ENCODE measurements at regions of chr12 and their contacts with region 1.

Region 1: DNA sequence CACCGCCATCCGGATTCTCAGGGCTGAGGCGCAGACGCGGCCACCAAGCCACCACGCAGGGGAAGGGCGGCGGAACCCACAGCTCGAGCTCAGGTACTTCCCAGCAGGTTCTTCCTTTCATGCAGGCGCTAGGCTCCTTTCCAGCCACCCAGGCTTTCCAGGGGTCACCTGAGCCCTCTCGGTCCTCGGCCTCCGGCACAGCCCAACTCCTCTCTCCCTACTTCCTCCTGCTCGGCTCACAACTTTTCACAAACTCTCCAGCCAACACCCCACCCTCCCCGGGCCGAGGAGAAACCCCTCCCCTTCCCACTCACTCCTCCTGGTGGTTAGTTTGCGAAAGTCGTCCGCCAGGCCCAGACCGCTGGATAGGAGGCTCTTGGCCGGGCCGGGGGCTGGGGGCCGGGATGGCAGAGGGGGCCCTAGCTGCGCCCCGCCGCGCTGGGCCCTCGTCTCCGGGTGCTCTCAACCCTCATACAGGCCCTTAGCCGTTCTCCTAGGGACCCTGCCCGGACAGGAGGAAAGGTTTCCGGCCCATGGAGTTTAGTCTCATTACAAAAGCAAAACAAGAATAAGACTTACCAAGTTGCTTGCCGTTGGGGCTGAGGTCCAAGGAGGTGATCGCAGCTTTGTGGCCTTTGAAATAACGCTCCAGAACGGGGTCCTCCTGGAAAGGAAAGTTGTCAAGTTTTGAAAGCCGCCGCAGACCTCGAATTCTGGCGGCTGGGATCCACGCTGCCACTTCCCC is at the start of gene GALNT4:
- DNase-seq: peak; percentile 74
- H3K4me3 Mint-ChIP-seq: peak within 1 kb of the TSS; percentile 92
- H3K27ac Mint-ChIP-seq: peak within 1 kb of the TSS; percentile 94
- H3K4me1 Mint-ChIP-seq: peaks cover 45% of the 10 kb centered on the region
- H3K27me3 Mint-ChIP-seq: no peaks in the 10 kb centered on the region
- total RNA-seq, gene GALNT4: 8.7 TPM in 2 replicates

Region 2: DNA sequence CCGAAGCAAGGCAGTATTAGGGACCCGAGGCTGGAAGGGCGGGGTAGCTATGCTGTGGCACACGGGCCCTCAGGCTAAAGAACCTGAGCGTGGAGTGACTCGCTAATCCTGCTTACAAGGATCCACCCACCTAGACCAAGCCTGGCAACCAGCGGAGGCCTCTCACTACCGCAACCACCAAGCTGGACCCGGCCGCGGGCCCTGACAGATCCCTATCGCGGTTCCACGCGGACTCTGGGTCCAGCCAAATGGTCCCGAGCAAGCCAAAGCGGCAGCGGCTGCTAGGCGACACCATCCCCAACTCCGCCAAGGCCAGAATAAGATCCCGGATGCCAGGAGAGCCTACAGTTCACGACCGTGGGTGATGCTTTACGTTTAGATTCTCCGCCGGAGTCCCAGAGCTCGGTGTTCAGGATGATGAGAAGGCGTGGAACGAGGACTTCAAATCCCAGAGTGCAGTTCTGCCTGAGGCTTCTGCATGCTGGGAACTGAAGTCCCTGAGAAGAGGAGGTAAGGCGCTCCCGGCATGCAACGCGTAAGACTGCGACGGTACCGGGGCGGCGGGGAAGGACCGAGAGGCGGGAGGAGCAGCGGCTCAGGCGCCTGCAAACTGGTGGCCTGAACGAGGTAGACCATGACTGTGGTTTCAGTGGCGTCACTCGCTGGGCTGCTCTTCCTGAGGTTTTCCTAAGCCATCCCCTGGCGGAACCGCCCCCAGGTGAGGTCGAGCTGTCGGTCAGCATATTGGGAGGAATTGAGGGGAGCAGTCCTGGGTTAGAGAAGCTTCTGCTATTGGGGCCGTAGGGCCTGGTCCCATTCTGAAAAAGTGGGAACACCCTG is 1382.7 kb before region 1 on chr12 and contains the starts of genes CEP290 and TMTC3:
- intact Hi-C with region 1: loop called (anchors 2 kb)
- DNase-seq: peak; percentile 92
- H3K4me3 Mint-ChIP-seq: peak within 1 kb of the TSS; percentile 91
- H3K27ac Mint-ChIP-seq: peak within 1 kb of the TSS; percentile 95
- H3K4me1 Mint-ChIP-seq: peaks cover 34% of the 10 kb centered on the region
- H3K27me3 Mint-ChIP-seq: no peaks in the 10 kb centered on the region
- total RNA-seq, gene CEP290: 15.5 and 17.0 TPM in 2 replicates
- total RNA-seq, gene TMTC3: 6.9 and 7.1 TPM in 2 replicates

Region 3: DNA sequence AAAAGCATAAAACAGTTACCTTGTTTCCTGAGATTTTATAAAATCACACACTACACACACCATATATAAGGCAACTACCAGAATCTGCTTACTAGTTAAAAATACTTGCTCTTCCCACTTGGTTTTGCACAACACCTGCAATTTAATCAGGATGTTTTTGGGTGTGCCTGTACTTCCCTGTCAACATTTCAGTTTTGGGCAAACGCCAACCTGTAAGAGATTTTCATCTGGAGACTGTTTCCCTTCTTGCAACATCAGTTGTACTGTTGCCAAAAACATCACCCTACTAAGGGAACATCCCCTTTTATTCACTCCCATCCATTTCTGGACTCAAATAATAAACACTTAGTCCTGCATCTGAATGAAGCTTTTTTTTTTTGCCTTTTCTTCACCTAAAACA is 344.7 kb before region 1 on chr12:
- intact Hi-C with region 1: loop called (anchors 1 kb)
- DNase-seq: no peak
- H3K4me3 Mint-ChIP-seq: peak overlapping the region; percentile 48
- H3K27ac Mint-ChIP-seq: peak overlapping the region; percentile 95
- H3K4me1 Mint-ChIP-seq: peaks cover 62% of the 10 kb centered on the region
- H3K27me3 Mint-ChIP-seq: no peaks in the 10 kb centered on the region

Region 4: GRCh38 chr12:89389755-89390661 is 134.7 kb before region 1 on chr12:
- intact Hi-C with region 1: loop called (anchors 5 kb)
- DNase-seq: no peak
- H3K4me3 Mint-ChIP-seq: no peak overlapping the region
- H3K27ac Mint-ChIP-seq: peak overlapping the region; percentile 78
- H3K4me1 Mint-ChIP-seq: peaks cover 33% of the 10 kb centered on the region
- H3K27me3 Mint-ChIP-seq: no peaks in the 10 kb centered on the region

Region 5: DNA sequence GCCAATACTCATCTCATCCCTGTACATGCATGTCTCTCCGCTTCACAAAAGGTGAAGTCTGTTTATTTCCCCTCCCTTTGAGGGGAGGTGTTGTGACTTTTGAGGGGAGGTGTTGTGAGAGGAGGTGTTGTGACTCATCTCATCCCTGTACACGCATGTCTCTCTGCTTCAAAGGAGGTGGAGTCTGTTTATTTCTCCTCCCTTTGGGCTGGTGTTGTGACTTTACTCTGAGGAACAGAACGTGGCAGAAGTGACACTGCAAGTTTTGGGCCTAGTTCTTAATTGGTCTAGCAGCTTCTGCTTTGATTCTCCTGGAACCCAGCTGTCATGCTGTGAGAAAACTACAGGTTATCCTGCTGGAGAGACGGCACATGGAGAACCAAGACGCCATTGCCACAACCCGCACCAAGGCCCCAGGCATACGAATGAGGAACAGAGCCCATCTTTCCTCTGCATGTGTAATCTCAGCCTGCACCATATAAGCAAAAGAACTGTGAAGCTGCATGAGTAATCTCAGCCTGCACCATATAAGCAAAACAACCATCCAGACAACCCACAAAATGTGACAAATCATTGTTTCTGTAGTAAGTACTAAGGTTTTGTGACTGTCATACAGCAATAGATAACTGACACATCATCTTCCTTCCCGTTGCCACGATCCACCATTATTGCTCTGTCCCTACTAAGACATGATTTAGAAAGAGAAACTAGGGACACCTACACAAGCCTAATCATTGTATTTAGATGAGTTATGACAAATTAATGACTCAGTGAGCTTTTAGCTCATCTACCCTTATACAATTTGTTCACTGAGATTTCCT is 30.1 kb before region 1 on chr12:
- intact Hi-C with region 1: loop called (anchors 1 kb)
- DNase-seq: peak; percentile 16
- H3K4me3 Mint-ChIP-seq: peak overlapping the region; percentile 50
- H3K27ac Mint-ChIP-seq: peak overlapping the region; percentile 92
- H3K4me1 Mint-ChIP-seq: peaks cover 34% of the 10 kb centered on the region
- H3K27me3 Mint-ChIP-seq: no peaks in the 10 kb centered on the region

Measured in activated T-helper 1 cell treated with anti-CD3 and anti-CD28 coated beads, Interleukin-12 subunit alpha, Interleukin-12 subunit beta, Interleukin-2, Interleukin-4 antibody, amounts not matched to agents 30 ng/mL and 10 ng/mL and 1 ng/mL, durations not matched to agents 14 hours and 24 hours and 36 hours (primary cell).